ENCODE measurements at regions of chr5 and their contacts with region 1.

Region 1: GRCh38 chr5:153964880-153965645 is 73.6 kb downstream of the FAM114A2 start:
- DNase-seq: peak in 1 of 2 experiments; percentile 81
- H3K4me3 ChIP-seq: peak overlapping the region in 3 of 4 experiments; percentile 4 to 46 (median 8); a peak in 4 of 8 replicates
- H3K27ac ChIP-seq: no peak overlapping the region
- H3K4me1 ChIP-seq: peaks cover 4 to 13% (median 7%) of the 10 kb centered on the region in 4 experiments; a peak in 6 of 7 replicates
- H3K27me3 ChIP-seq: no peaks in the 10 kb centered on the region; a peak in 1 of 7 replicates
- CTCF ChIP-seq: peak; percentile 73 to 91 (median 82)
- EP300 ChIP-seq: no peak
- POLR2A ChIP-seq: no peak
- RAD21 ChIP-seq: peak; percentile 98 to 99

Region 2: DNA sequence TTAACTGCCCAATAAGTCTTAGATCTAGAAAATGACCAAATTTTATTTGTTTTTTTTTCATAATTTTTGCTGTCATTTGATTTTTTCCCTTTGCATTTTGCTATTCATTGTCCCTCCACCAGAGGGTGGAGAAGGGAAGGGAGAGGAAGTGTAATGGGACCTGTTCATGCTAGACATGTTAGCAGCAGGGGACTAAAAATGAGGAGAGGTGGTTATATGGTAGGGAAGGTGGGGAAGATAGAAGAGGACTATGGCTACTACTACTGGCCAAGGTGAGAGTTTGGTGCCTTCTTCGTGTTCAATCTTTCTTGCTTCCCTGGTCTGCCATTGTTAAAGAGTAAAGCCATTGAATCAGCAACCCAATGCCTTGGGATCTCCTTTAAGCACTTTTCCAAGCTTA is 468.2 kb before region 1 on chr5:
- CTCF ChIA-PET with region 1: interaction called, 27 read pairs
- POLR2A ChIA-PET with region 1: no interaction called
- DNase-seq: no peak
- H3K4me3 ChIP-seq: no peak overlapping the region
- H3K27ac ChIP-seq: no peak overlapping the region
- H3K4me1 ChIP-seq: peaks cover 0 to 5% (median 3%) of the 10 kb centered on the region in 4 experiments; a peak in 2 of 7 replicates
- H3K27me3 ChIP-seq: peaks cover 0 to under 1% (median 0%) of the 10 kb centered on the region in 4 experiments; a peak in 1 of 7 replicates
- CTCF ChIP-seq: peak in 2 of 3 experiments; percentile 48 to 66; a peak in 2 of 4 replicates
- EP300 ChIP-seq: no peak
- POLR2A ChIP-seq: no peak
- RAD21 ChIP-seq: peak; percentile 86 to 88

Region 3: GRCh38 chr5:153756540-153756939 is 208.5 kb before region 1 on chr5:
- CTCF ChIA-PET with region 1: interaction called, 32 read pairs
- POLR2A ChIA-PET with region 1: no interaction called
- DNase-seq: no peak
- H3K4me3 ChIP-seq: no peak overlapping the region
- H3K27ac ChIP-seq: no peak overlapping the region
- H3K4me1 ChIP-seq: peaks cover 0 to 4% (median 0%) of the 10 kb centered on the region in 4 experiments; a peak in 1 of 7 replicates
- H3K27me3 ChIP-seq: no peaks in the 10 kb centered on the region
- CTCF ChIP-seq: peak in 2 of 3 experiments; percentile 42; a peak in 3 of 4 replicates
- EP300 ChIP-seq: no peak
- POLR2A ChIP-seq: no peak
- RAD21 ChIP-seq: peak; percentile 69 to 84

Region 4: GRCh38 chr5:153782589-153783361 is 182.3 kb before region 1 on chr5:
- CTCF ChIA-PET with region 1: interaction called, 15 read pairs
- POLR2A ChIA-PET with region 1: no interaction called
- DNase-seq: peak in 1 of 2 experiments; percentile 47
- H3K4me3 ChIP-seq: no peak overlapping the region
- H3K27ac ChIP-seq: no peak overlapping the region
- H3K4me1 ChIP-seq: peaks cover 4 to 16% (median 12%) of the 10 kb centered on the region in 4 experiments; a peak in 5 of 7 replicates
- H3K27me3 ChIP-seq: no peaks in the 10 kb centered on the region
- CTCF ChIP-seq: peak; percentile 14 to 51 (median 42); a peak in 3 of 4 replicates
- EP300 ChIP-seq: no peak
- POLR2A ChIP-seq: no peak
- RAD21 ChIP-seq: peak; percentile 55 to 62; a peak in 3 of 4 replicates

Region 5: DNA sequence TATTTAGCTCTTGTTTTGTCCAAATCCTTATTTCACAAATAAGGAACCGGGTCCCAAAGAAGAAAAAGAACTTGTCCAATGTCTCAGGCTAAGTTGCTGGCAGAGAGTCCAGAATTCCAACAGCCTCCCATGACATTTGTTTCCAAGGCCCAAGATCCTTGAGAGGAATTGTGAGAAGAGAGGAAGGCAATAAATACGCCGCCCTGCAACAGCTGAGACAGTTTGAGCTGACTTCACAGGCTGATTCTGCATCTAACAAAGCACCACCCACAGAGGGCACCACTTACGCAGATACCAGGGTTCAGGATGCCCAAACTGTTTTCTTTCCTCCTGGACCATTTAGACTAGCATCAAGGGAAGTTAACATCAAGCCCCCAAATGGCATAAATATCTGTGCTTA is 137.7 kb before region 1 on chr5:
- CTCF ChIA-PET with region 1: interaction called, 78 read pairs
- POLR2A ChIA-PET with region 1: interaction called, 4 read pairs
- DNase-seq: no peak
- H3K4me3 ChIP-seq: no peak overlapping the region
- H3K27ac ChIP-seq: no peak overlapping the region
- H3K4me1 ChIP-seq: peaks cover 0 to 9% (median 2%) of the 10 kb centered on the region in 4 experiments; a peak in 4 of 7 replicates
- H3K27me3 ChIP-seq: no peaks in the 10 kb centered on the region
- CTCF ChIP-seq: peak; percentile 45 to 69 (median 51); a peak in 3 of 4 replicates
- EP300 ChIP-seq: no peak
- POLR2A ChIP-seq: no peak
- RAD21 ChIP-seq: peak; percentile 70 to 74

Region 6: GRCh38 chr5:153987306-153987705 is 22.2 kb after region 1 on chr5:
- CTCF ChIA-PET with region 1: interaction called, 13 read pairs
- POLR2A ChIA-PET with region 1: no interaction called
- DNase-seq: no peak
- H3K4me3 ChIP-seq: no peak overlapping the region
- H3K27ac ChIP-seq: no peak overlapping the region
- H3K4me1 ChIP-seq: no peaks in the 10 kb centered on the region
- H3K27me3 ChIP-seq: no peaks in the 10 kb centered on the region
- CTCF ChIP-seq: no peak
- EP300 ChIP-seq: no peak
- POLR2A ChIP-seq: no peak
- RAD21 ChIP-seq: no peak

Measured in H1 (cell line).